ENCODE measurements at regions of chr16 and their contacts with region 1.

Region 1: DNA sequence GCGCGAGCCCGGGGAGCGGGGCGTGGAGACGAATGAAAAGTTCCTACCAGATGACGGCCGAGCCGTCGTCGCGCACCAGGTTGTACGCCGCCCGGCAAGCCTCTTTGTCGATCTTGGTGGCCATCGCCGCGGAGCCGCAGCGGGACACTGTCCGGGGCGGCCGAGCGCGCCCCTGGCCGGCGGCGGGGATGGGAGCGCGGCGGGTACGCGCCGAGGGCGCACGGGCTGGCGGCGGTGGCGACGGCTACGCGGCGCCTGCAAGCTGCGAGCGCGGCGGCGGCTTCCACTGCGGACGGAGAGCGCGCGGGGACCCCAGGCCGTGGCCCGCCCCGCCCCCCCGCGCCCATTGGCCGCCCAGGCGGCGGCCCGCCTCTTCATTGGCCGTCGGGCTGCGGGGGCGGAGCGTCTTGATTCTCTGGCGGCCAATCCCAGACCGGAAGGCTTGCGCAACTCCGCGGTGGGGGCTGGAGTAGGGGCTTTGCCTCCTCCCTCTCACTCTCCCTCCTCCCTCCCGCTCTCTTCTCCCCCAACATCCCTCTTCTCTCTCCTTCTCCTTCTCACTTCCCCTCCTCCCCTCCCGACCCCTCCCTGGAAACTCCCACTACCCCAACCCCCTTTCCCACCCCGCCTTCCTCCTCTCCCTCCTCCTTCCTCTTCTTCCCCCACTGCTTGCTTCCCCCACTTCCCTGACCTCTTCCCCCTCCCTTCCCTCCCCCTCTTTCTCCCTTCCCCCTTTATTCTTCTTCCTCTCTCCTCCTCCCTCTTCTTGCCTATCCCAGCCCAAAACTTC is at the start of gene COTL1:
- DNase-seq: peak; percentile 95
- ATAC-seq: peak; percentile 64
- H3K4me3 ChIP-seq: peak within 1 kb of the TSS; percentile 94
- H3K27ac ChIP-seq: peak within 1 kb of the TSS; percentile 99
- H3K4me1 ChIP-seq: peaks cover 41% of the 10 kb centered on the region
- H3K27me3 ChIP-seq: no peaks in the 10 kb centered on the region
- CTCF ChIP-seq: no peak
- total RNA-seq, gene COTL1: 408 and 465 TPM in 2 replicates

Region 2: GRCh38 chr16:83898463-83899271 is 719.3 kb before region 1 on chr16 and contains the start of gene MLYCD:
- CTCF ChIA-PET with region 1: no interaction called
- POLR2A ChIA-PET with region 1: no interaction called
- intact Hi-C with region 1: no loop called
- DNase-seq: peak; percentile 67
- ATAC-seq: peak; percentile 93
- H3K4me3 ChIP-seq: peak within 1 kb of the TSS; percentile 69
- H3K27ac ChIP-seq: no peak within 1 kb of the TSS
- H3K4me1 ChIP-seq: peaks cover 7% of the 10 kb centered on the region
- H3K27me3 ChIP-seq: no peaks in the 10 kb centered on the region
- CTCF ChIP-seq: no peak
- total RNA-seq, gene MLYCD: 0.95 and 1.2 TPM in 2 replicates

Region 3: GRCh38 chr16:84511180-84511824 is 106.7 kb before region 1 on chr16:
- CTCF ChIA-PET with region 1: interaction called, 3 read pairs
- POLR2A ChIA-PET with region 1: no interaction called
- intact Hi-C with region 1: loop called (anchors 1 kb)
- DNase-seq: peak; percentile 87
- ATAC-seq: peak; percentile 89
- H3K4me3 ChIP-seq: peak overlapping the region; percentile 41; the same call in 1 of the 2 replicates
- H3K27ac ChIP-seq: no peak overlapping the region
- H3K4me1 ChIP-seq: peaks cover 5% of the 10 kb centered on the region
- H3K27me3 ChIP-seq: no peaks in the 10 kb centered on the region
- CTCF ChIP-seq: peak; percentile 91

Region 4: DNA sequence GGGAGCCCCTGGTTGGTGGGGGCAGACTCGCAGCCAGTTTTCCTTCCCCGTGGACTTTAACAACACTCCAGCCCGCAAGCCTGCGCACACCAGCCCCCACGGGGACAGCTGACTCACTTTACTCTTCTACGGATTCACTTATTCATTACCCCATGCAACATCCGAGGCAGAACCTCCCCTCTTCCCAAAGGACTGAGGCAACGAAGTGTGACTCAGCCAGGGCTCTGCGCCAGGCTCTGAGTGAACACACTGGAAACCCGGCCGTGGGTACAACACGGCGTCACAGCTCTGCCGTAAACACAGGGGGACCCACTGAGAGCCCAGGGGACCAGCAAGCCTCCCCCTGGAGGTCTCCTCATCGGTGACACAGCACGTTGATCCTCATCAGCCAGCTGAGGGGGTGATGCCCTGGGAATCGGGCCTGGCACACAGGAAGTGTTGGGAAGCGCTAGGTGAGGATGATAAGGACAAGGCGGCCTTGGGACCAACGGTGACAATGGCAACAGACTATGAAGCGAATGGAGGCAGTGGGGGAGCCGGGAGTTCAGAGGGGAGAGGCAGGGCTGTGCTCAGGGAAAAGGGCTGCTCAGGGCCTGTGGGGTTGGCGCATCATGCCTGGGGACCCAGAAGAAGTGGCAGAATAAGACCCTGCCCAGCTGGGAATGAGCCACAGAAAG is 14.7 kb before region 1 on chr16:
- CTCF ChIA-PET with region 1: no interaction called
- POLR2A ChIA-PET with region 1: no interaction called
- intact Hi-C with region 1: loop called (anchors 2 kb)
- DNase-seq: peak; percentile 92
- ATAC-seq: peak; percentile 86
- H3K4me3 ChIP-seq: peak overlapping the region; percentile 51
- H3K27ac ChIP-seq: peak overlapping the region; percentile 81
- H3K4me1 ChIP-seq: peaks cover 22% of the 10 kb centered on the region
- H3K27me3 ChIP-seq: no peaks in the 10 kb centered on the region
- CTCF ChIP-seq: no peak

Region 5: DNA sequence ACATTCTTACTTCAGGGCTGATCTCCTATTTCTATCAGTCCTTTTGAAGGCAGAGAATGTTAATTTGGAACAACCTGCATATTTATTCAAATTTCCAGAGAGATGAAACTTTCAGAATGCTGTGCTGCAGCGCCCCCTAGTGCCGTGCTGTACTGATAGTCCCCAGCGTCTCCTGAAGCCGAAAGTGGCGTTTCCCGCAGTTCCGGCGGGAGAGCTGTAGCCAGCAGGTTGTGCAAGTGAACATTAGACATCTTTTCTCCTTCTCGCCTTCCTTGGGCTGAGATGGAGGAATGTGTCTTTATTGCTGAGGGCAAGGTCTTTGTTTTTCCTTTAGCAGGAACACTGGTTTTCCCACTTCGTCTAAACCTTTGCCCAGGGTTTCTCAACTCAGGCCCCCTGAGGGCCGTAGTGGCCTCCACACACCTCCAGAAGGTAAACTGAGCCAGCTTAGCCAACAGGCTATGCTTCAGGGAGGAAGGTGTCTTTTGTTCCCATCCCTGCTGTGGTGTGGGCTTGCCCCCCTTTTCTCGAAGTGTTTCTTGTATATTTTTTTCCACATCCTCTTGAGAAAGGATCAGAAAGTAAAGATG is 108.2 kb after region 1 on chr16:
- CTCF ChIA-PET with region 1: interaction called, 3 read pairs
- POLR2A ChIA-PET with region 1: no interaction called
- intact Hi-C with region 1: loop called (anchors 1 kb)
- DNase-seq: peak; percentile 81
- ATAC-seq: peak; percentile 66
- H3K4me3 ChIP-seq: peak overlapping the region; percentile 21; the same call in 1 of the 2 replicates
- H3K27ac ChIP-seq: no peak overlapping the region
- H3K4me1 ChIP-seq: peaks cover 36% of the 10 kb centered on the region
- H3K27me3 ChIP-seq: no peaks in the 10 kb centered on the region
- CTCF ChIP-seq: peak; percentile 95

Region 6: DNA sequence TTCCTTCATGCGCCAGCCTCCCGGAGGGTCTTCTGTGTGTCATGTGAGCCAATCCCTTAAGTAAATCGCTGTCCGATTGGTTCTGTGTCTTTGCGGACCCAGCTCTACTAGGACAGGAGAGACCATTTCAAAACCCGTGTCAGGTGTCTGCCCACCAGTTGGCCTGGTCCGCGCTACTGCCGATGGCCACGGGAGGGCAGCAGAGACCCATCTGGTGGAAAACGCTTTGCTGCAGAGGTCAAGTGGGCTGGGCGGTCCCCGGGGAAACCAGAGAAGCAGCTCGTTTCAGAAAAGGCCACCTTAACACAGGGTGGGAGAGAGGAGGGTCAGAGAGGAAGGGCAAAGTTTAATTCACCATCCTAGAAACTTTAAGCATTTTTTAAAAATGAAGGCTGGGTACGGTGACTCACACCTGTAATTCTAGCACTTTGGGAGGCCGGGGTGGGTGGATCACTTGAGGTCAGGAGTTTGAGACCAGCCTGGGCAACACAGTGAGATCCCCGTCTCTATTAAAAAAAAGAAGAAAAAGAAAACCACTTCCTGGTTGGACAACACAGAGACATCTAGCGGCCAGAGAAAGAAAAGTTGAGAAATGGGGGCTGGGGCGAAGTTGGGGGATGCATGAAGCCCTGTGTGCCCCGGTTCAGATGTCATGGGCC is 497.1 kb after region 1 on chr16:
- CTCF ChIA-PET with region 1: no interaction called
- POLR2A ChIA-PET with region 1: no interaction called
- intact Hi-C with region 1: no loop called
- DNase-seq: peak; percentile 87
- ATAC-seq: peak; percentile 96
- H3K4me3 ChIP-seq: no peak overlapping the region
- H3K27ac ChIP-seq: no peak overlapping the region
- H3K4me1 ChIP-seq: peaks cover 2% of the 10 kb centered on the region; the same call in 1 of the 2 replicates
- H3K27me3 ChIP-seq: no peaks in the 10 kb centered on the region
- CTCF ChIP-seq: peak; percentile 92